Left cardiac atrium (tissue), 4 donors: ENCODE measurements at regions of chr17 and their contacts with region 1.

Region 1: GRCh38 chr17:40113110-40113906 is 8.5 kb upstream of the MSL1 start:
- DNase-seq: peak; percentile 93
- ATAC-seq: peak; percentile 75 to 80

Region 2: GRCh38 chr17:39410279-39410678 is 703.0 kb before region 1 on chr17:
- intact Hi-C with region 1: no loop called
- DNase-seq: no peak
- ATAC-seq: no peak

Region 3: GRCh38 chr17:40019140-40019991 is 93.9 kb before region 1 on chr17:
- intact Hi-C with region 1: loop called in 1 of 2 experiments (anchors 5 kb)
- DNase-seq: peak; percentile 48
- ATAC-seq: peak in 1 of 2 donors; percentile 11

Region 4: GRCh38 chr17:40062329-40063186 is 50.8 kb before region 1 on chr17 and contains the start of gene THRA:
- intact Hi-C with region 1: loop called in 1 of 2 experiments (anchors 2 kb)
- DNase-seq: peak; percentile 75
- ATAC-seq: peak; percentile 82 to 88
- total RNA-seq, gene THRA: 54.4 to 77.9 TPM

Region 5: DNA sequence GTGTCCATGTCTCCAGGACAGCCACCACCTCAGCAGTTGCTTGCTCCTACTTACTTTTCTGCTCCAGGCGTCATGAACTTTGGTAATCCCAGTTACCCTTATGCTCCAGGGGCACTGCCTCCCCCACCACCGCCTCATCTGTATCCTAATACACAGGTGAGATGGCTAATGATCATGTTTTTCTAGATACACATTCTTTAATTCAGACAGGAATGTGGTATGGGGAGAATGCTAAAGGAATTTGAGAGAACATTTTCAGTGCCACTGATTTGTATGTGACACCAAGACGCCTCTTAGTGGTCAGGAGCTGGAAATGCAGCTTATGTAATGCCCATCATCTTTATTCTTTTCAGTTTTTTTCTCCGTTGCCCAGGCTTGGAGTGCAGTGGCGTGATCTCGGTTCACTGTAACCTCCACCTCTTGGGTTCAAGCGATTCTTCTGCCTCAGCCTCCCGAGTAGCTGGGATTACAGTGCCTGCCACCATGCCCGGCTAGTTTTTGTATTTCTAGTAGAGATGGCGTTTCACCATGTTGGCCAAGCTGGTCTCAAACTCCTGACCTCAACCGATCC is 55.0 kb after region 1 on chr17:
- intact Hi-C with region 1: loop called (anchors 2 to 10 kb)
- DNase-seq: no peak
- ATAC-seq: peak; percentile 61 to 80

Region 6: DNA sequence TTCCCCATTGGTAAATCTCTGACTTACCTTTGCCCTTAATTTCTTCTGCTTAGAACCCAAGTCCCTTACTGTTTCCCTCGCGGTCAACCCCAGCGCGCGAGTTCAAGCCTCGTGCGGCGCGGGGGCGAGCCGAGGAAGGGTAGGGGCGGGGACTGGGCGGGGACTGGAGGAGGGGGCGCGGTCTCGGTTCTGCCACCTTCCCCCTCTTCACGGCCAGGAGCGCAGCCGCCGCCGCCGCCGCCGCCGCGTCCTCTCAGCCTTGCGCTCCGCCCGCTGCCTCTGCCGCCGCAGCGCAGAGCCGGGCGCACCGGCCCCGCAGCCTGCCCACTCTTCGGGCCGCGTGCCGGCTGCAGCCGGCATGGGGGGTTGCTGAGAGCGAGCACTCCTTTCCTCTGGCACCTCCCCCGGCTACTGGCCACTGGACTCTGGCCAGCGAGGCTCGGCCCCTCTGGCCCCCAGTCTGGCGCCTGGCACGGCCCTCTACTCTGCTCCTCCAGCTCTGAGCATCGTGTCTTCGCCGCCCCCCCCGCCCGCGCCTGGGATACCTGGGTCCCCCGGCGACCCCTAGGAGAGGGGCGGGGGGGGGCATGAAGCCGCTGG is 64.1 kb after region 1 on chr17 and contains the start of gene RAPGEFL1:
- intact Hi-C with region 1: loop called in 1 of 2 experiments (anchors 10 kb)
- DNase-seq: peak; percentile 82
- ATAC-seq: peak; percentile 90 to 92
- total RNA-seq, gene RAPGEFL1: 2.8 to 4.6 TPM